Calu3 (cell line): ENCODE measurements at regions of chr19 and their contacts with region 1.

Region 1: DNA sequence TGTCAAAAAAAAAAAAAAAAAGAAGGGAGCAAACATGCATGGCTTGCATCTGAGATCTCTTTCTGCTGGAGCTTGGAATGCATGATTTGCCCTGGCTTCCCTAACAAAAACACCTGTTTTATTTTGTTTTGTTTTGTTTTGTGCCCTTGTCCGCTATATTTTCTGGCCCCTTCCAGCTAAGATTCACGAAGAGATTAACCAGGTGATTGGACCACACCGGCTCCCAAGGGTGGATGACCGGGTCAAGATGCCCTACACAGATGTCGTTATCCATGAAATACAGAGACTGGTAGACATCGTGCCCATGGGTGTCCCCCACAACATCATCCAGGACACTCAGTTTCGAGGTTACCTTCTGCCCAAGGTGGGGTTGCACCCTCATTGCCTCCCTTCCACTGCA is 15.9 kb upstream of the CYP2A7 start:
- DNase-seq: no peak
- H3K4me3 Mint-ChIP-seq: no peak overlapping the region
- H3K27ac Mint-ChIP-seq: no peak overlapping the region
- H3K4me1 Mint-ChIP-seq: no peaks in the 10 kb centered on the region
- H3K27me3 Mint-ChIP-seq: peaks cover 48% of the 10 kb centered on the region
- CTCF ChIP-seq: no peak

Region 2: GRCh38 chr19:41175801-41176777 is 278.1 kb after region 1 on chr19:
- CTCF ChIA-PET with region 1: interaction called, 10 read pairs
- intact Hi-C with region 1: no loop called
- DNase-seq: peak; percentile 92
- H3K4me3 Mint-ChIP-seq: peak overlapping the region; percentile 44
- H3K27ac Mint-ChIP-seq: peak overlapping the region; percentile 67
- H3K4me1 Mint-ChIP-seq: peaks cover 37% of the 10 kb centered on the region
- H3K27me3 Mint-ChIP-seq: no peaks in the 10 kb centered on the region
- CTCF ChIP-seq: no peak